ENCODE measurements at regions of chr12 and their contacts with region 1.

Region 1: GRCh38 chr12:65106948-65107347 is 14.2 kb downstream of the WIF1 start:
- DNase-seq: peak; percentile 9
- H3K4me3 ChIP-seq: no peak overlapping the region
- H3K27ac ChIP-seq: no peak overlapping the region
- H3K4me1 ChIP-seq: no peaks in the 10 kb centered on the region
- H3K27me3 ChIP-seq: peaks cover 1 to 4% of the 10 kb centered on the region in 2 experiments
- CTCF ChIP-seq: peak in 1 of 2 donors; percentile 24
- POLR2A ChIP-seq: no peak

Region 2: GRCh38 chr12:65121049-65121955 is 14.4 kb after region 1 on chr12 and contains the start of gene WIF1:
- CTCF ChIA-PET with region 1: interaction called, 12 read pairs
- POLR2A ChIA-PET with region 1: no interaction called
- dilution Hi-C with region 1: no loop called
- intact Hi-C with region 1: no loop called
- DNase-seq: peak; percentile 22
- H3K4me3 ChIP-seq: peak within 1 kb of the TSS; percentile 12 to 21 (median 13)
- H3K27ac ChIP-seq: no peak within 1 kb of the TSS
- H3K4me1 ChIP-seq: peaks cover 2% of the 10 kb centered on the region
- H3K27me3 ChIP-seq: peaks cover 36 to 67% of the 10 kb centered on the region in 2 experiments
- CTCF ChIP-seq: peak; percentile 59 to 69
- POLR2A ChIP-seq: no peak
- total RNA-seq, gene WIF1: not detected in 2 replicates

Region 3: GRCh38 chr12:65464930-65465329 is 358.0 kb after region 1 on chr12:
- CTCF ChIA-PET with region 1: no interaction called
- POLR2A ChIA-PET with region 1: no interaction called
- dilution Hi-C with region 1: no loop called
- intact Hi-C with region 1: no loop called
- DNase-seq: peak; percentile 18
- H3K4me3 ChIP-seq: no peak overlapping the region
- H3K27ac ChIP-seq: no peak overlapping the region
- H3K4me1 ChIP-seq: no peaks in the 10 kb centered on the region
- H3K27me3 ChIP-seq: no peaks in the 10 kb centered on the region
- CTCF ChIP-seq: no peak
- POLR2A ChIP-seq: no peak